ENCODE measurements at regions of chr2 and their contacts with region 1.

Region 1: GRCh38 chr2:119311356-119311755 is 55.3 kb downstream of the C2orf76 start:
- DNase-seq: no peak
- H3K4me3 ChIP-seq: no peak overlapping the region
- H3K27ac ChIP-seq: no peak overlapping the region
- H3K27me3 ChIP-seq: no peaks in the 10 kb centered on the region
- CTCF ChIP-seq: no peak

Region 2: GRCh38 chr2:118882709-118883210 is 428.6 kb before region 1 on chr2:
- intact Hi-C with region 1: loop called in 1 of 2 experiments (anchors 5 kb)
- DNase-seq: peak in 8 of 10 donors; percentile 15 to 74 (median 58)
- H3K4me3 ChIP-seq: peak overlapping the region in 27 of 59 donors; percentile 4 to 48 (median 28)
- H3K27ac ChIP-seq: no peak overlapping the region
- H3K27me3 ChIP-seq: peaks cover 0 to 42% (median 25%) of the 10 kb centered on the region in 45 donors
- CTCF ChIP-seq: peak; percentile 40 to 90 (median 81)

Region 3: DNA sequence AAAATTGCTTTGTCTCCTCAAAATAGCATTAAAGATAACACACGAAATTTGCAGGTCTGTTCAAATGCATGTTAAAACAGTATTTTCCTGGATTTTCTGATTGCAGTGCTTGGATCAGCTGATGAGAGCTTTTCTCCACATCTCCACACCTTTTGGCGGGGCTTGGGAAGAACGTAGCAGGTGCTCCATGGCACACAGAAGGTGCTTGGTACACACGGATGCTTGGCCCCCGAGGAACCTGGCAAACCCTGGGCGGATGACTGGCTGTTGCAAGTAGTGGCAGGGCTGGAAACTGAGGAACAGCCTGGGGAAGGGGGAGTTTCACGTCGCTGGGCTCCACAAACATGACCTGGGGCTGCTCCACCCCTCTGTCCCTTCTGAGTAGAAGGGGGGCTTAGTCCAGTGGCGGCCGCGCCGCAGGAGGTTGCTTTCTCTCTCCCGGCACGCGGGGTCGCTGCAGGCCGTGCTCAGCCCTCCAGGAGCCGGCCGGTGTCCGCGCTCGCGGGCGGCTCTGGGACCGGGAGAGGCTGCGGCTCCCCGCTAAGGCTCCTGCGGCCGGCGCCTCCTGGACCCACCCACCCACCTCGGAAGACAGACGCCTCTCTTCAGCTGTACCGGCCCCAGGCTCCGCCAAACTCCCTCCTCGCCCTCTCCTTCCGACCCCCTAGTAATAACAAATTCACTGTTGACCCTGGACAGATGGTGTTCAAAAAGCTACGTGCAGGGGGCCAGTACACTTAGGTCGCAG is 300.0 kb before region 1 on chr2:
- intact Hi-C with region 1: loop called in 1 of 2 experiments (anchors 5 kb)
- DNase-seq: peak in 6 of 10 donors; percentile 26 to 75 (median 54)
- H3K4me3 ChIP-seq: peak overlapping the region in 28 of 59 donors; percentile 0 to 50 (median 28)
- H3K27ac ChIP-seq: no peak overlapping the region
- H3K27me3 ChIP-seq: peaks cover 0 to 39% (median 7%) of the 10 kb centered on the region in 45 donors
- CTCF ChIP-seq: peak in 54 of 56 donors; percentile 28 to 79 (median 64)

Measured in dorsolateral prefrontal cortex (tissue), 120 donors.